BJ (cell line): ENCODE measurements at regions of chr10 and their contacts with region 1.

Region 1: DNA sequence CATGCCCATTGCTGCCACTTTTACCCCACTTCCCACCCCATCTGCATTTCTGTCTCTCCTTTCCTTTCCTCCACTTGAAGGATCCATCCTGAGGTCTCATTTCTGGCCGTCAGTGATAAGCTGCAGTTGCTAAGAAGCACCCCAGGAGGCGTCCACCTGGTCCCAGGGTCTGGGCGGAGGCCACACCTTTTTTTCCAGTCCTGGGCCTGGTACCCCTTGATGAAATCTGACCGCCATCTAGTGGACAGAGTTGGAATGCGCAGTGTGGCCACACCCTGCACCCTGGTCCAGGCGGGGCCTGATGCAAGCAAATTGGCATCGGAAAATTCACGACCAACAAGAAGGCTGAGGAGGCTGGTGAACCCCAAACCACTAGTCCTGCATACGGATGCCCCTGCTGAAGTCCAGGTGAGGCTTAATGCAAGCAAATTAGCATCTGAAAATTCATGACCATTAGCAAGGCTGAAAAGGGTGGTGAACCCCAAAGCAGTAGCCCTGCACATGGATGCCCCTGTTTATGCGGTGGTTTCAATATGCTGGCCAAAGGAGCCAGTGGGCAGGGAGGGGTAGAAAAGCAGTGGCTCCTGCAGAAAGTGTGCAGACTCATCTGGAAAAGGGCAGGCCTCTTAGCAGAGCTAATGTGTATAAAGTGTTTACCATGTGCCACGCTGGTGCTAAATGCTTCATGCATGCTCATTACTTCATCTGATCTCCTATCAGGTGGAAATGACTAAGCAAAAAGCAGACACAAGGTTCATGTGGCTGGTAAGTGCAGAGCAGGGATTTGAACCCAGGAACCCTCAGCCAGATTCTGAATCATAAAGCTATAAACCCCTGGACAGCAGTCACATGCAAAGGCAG is 43.2 kb downstream of the GPAM start:
- DNase-seq: no peak
- H3K4me3 ChIP-seq: no peak overlapping the region
- H3K27me3 ChIP-seq: peaks cover 1% of the 10 kb centered on the region; the same call in 1 of the 2 replicates
- CTCF ChIP-seq: peak; percentile 94

Region 2: GRCh38 chr10:112115799-112116385 is 24.4 kb before region 1 on chr10:
- CTCF ChIA-PET with region 1: interaction called, 64 read pairs
- POLR2A ChIA-PET with region 1: no interaction called
- DNase-seq: no peak
- H3K4me3 ChIP-seq: no peak overlapping the region
- H3K27me3 ChIP-seq: no peaks in the 10 kb centered on the region
- CTCF ChIP-seq: peak; percentile 85

Region 3: GRCh38 chr10:112122827-112123226 is 17.5 kb before region 1 on chr10:
- CTCF ChIA-PET with region 1: interaction called, 67 read pairs
- POLR2A ChIA-PET with region 1: no interaction called
- DNase-seq: no peak
- H3K4me3 ChIP-seq: no peak overlapping the region
- H3K27me3 ChIP-seq: no peaks in the 10 kb centered on the region
- CTCF ChIP-seq: no peak

Region 4: GRCh38 chr10:112151524-112152039 is 11.2 kb after region 1 on chr10:
- CTCF ChIA-PET with region 1: interaction called, 69 read pairs
- POLR2A ChIA-PET with region 1: no interaction called
- DNase-seq: no peak
- H3K4me3 ChIP-seq: no peak overlapping the region
- H3K27me3 ChIP-seq: no peaks in the 10 kb centered on the region
- CTCF ChIP-seq: no peak

Region 5: GRCh38 chr10:112160834-112161233 is 20.5 kb after region 1 on chr10:
- CTCF ChIA-PET with region 1: interaction called, 17 read pairs
- POLR2A ChIA-PET with region 1: no interaction called
- DNase-seq: no peak
- H3K4me3 ChIP-seq: no peak overlapping the region
- H3K27me3 ChIP-seq: no peaks in the 10 kb centered on the region
- CTCF ChIP-seq: no peak

Region 6: GRCh38 chr10:112307358-112308124 is 167.2 kb after region 1 on chr10:
- CTCF ChIA-PET with region 1: interaction called, 39 read pairs
- POLR2A ChIA-PET with region 1: no interaction called
- DNase-seq: no peak
- H3K4me3 ChIP-seq: no peak overlapping the region
- H3K27me3 ChIP-seq: peaks cover 1% of the 10 kb centered on the region
- CTCF ChIP-seq: peak; percentile 92

Region 7: DNA sequence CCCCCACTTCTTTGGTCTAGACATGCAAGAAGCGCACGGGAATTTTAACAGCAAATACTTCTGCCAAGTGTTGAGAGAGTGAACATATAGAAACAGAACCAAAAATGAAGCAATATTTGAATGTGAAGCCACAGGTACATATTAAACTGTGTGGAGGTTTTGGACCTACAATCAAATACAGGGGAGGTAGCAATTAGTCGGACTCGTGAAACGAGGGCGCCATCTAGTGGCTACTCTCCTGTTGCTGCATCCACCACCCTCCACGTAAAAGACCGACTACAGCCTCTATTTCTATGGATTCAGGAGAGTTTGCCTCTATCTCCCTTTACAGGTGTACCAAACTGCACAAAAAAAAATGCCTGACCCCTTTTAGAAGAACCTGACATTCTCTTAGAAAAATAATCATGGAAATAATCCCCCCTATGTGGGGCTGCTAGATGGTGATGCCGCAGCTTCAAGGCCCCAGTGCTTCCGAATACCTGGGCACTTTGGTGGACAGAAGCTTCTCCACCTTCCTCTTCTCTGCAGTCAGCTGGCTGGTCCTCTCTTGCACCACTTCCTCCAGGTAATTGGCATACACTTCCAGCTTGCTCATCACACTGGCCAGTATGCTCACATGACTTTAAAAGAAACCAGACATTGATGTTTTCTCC is 174.6 kb after region 1 on chr10:
- CTCF ChIA-PET with region 1: interaction called, 39 read pairs
- POLR2A ChIA-PET with region 1: no interaction called
- DNase-seq: no peak
- H3K4me3 ChIP-seq: no peak overlapping the region
- H3K27me3 ChIP-seq: peaks cover 4% of the 10 kb centered on the region; the same call in 1 of the 2 replicates
- CTCF ChIP-seq: peak; percentile 84